IMR-90 (cell line): ENCODE measurements at regions of chr13 and their contacts with region 1.

Region 1: DNA sequence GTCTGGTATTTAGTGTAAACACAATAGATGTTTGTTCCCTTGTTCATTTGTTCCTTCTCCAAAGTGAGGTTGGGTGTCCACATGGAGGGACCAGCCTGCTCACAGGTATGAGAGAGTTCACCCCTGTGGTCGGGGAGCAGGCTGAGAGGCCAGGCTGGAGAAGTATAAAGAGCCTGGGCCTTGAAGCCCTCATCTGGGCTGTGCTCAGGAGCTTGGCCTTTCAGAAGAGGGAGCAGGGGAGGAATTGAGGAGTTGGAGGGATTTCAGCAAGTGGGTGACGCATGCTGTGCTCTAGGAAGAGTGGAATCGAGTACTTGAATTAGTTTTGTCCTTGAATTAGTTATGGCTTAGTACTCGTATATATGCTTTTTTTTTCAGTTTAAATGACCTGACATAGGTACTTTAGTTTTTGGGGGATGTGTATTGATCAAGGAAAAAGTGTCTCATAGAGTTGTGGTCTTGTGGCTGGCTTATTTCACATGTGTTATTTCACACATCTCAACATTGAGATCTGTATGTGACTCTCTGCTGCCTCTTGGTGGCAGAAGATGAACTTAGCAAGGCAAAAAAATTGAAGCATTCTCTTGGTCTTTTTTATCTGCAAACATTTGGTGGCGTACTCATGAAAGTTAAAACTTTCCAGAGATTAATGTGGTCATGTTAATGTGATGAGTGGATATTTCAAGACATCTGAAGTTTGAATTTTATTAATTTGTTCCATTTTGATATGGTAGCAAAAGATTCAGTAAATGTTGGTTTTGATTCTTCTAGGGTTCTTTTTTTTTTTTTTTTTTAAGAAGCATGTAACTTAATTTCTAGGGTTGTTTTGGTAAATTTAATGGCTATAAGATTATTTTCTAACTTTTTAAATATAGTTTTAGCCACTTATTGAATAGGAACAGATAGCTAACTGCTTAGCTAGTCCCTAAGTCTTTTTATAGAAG is 54.3 kb downstream of the SLAIN1 start:
- DNase-seq: peak; percentile 37
- ATAC-seq: peak; percentile 85
- H3K4me3 ChIP-seq: no peak overlapping the region
- H3K27ac ChIP-seq: no peak overlapping the region
- H3K4me1 ChIP-seq: no peaks in the 10 kb centered on the region
- H3K27me3 ChIP-seq: no peaks in the 10 kb centered on the region; the same call in 1 of the 2 replicates
- CTCF ChIP-seq: peak; percentile 68
- POLR2A ChIP-seq: no peak
- RAD21 ChIP-seq: peak; percentile 54

Region 2: GRCh38 chr13:77196052-77196618 is 555.6 kb before region 1 on chr13:
- CTCF ChIA-PET with region 1: no interaction called
- POLR2A ChIA-PET with region 1: no interaction called
- dilution Hi-C with region 1: no loop called
- in situ Hi-C with region 1: no loop called
- intact Hi-C with region 1: loop called (anchors 10 kb)
- DNase-seq: no peak
- ATAC-seq: no peak
- H3K4me3 ChIP-seq: no peak overlapping the region
- H3K27ac ChIP-seq: no peak overlapping the region
- H3K4me1 ChIP-seq: no peaks in the 10 kb centered on the region
- H3K27me3 ChIP-seq: no peaks in the 10 kb centered on the region
- CTCF ChIP-seq: no peak
- POLR2A ChIP-seq: no peak
- RAD21 ChIP-seq: no peak

Region 3: DNA sequence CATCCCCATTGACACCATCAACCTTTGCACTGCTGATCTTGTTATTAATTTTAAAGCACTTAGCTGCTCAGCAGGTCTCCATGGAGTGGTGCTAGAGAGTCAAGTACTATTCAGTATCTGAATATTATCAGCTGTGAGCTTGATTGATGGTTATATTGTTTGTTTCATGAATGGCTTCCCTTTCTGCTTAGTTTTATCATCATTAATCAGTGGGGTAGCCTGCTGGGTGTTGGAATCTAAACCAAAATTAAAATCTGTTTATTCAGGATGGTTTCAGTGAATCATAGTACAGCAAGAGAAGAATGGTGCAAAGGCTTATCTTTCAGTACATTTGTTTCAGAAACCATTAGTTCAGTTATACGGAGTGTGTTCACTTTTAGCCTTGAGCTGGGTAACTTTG is 258.8 kb before region 1 on chr13:
- CTCF ChIA-PET with region 1: no interaction called
- POLR2A ChIA-PET with region 1: no interaction called
- dilution Hi-C with region 1: no loop called
- in situ Hi-C with region 1: no loop called
- intact Hi-C with region 1: loop called (anchors 5 kb)
- DNase-seq: no peak
- ATAC-seq: 0 out of 2 replicates have a peak, but pooled peaks have one; percentile 29
- H3K4me3 ChIP-seq: no peak overlapping the region
- H3K27ac ChIP-seq: no peak overlapping the region
- H3K4me1 ChIP-seq: no peaks in the 10 kb centered on the region
- H3K27me3 ChIP-seq: 0 out of 2 replicates have a peak, but pooled peaks cover 2% of the 10 kb centered on the region
- CTCF ChIP-seq: 0 out of 2 replicates have a peak, but pooled peaks have one; percentile 4
- POLR2A ChIP-seq: no peak
- RAD21 ChIP-seq: no peak

Region 4: DNA sequence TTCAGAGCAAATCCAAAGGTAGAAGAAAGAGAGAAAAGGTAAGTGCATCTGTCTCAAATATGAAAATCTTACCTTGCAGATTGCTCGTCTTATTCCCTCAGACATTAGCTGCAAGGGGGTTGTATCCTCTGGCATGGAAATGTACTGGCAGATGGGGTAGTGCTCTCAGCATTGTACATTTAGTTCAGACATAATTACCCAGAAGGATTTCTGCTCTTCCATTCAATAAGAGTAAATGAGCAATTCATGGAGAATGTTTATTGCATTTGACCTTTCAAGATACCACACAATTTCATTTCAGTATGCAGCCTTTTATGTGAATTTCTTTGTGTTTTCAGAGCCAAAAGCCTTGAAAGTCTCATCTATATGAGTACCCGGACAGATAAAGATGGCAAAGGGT is 152.4 kb before region 1 on chr13:
- CTCF ChIA-PET with region 1: no interaction called
- POLR2A ChIA-PET with region 1: no interaction called
- dilution Hi-C with region 1: no loop called
- in situ Hi-C with region 1: no loop called
- intact Hi-C with region 1: loop called (anchors 5 kb)
- DNase-seq: no peak
- ATAC-seq: no peak
- H3K4me3 ChIP-seq: no peak overlapping the region
- H3K27ac ChIP-seq: no peak overlapping the region
- H3K4me1 ChIP-seq: no peaks in the 10 kb centered on the region
- H3K27me3 ChIP-seq: no peaks in the 10 kb centered on the region
- CTCF ChIP-seq: no peak
- POLR2A ChIP-seq: no peak
- RAD21 ChIP-seq: no peak

Region 5: DNA sequence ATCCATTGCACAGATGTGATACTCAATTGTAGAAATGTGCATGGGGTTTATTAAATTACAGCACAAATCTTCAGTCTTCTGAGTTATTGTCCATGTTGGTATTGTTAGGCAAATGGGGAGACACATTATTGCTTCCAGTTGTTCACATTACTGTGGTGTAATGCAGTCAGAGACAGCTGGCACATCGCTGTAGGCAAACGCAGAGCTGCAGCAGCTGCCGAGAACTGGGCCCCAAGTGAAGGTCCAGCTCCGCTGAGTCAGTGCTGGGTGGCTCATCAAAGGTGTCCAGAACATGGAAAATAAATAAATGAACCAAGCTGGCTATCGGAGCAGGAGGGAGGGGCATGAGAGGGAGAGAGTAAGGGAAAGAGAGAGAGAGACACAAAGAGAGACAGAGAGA is 1206.2 kb after region 1 on chr13:
- CTCF ChIA-PET with region 1: no interaction called
- POLR2A ChIA-PET with region 1: no interaction called
- dilution Hi-C with region 1: no loop called
- in situ Hi-C with region 1: loop called (anchors 25 kb)
- intact Hi-C with region 1: no loop called
- DNase-seq: no peak
- ATAC-seq: no peak
- H3K4me3 ChIP-seq: no peak overlapping the region
- H3K27ac ChIP-seq: no peak overlapping the region
- H3K4me1 ChIP-seq: no peaks in the 10 kb centered on the region
- H3K27me3 ChIP-seq: no peaks in the 10 kb centered on the region
- CTCF ChIP-seq: no peak
- POLR2A ChIP-seq: no peak
- RAD21 ChIP-seq: no peak